Ascending aorta (tissue), 2 donors: ENCODE measurements at regions of chr17 and their contacts with region 1.

Region 1: DNA sequence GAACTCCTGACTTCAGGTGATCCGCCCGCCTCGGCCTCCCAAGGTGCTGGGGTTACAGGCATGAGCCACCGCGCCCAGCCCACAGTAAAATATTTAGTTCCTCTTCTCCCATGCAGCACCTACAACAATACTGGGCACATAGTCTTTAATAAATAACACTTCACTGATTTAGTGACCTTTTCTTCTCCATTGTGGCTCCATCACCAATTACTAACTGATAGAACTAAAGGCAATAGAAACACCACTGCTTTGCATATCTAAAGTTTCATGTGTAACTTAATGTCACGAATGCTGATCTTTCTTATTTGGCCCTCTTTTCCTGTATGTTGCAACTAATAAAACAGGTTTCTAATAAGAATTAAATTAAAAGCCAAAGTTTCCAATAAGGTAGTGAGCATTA is 38.9 kb downstream of the TRIM37 start:
- DNase-seq: no peak
- H3K4me3 ChIP-seq: no peak overlapping the region
- H3K27ac ChIP-seq: no peak overlapping the region
- H3K4me1 ChIP-seq: no peaks in the 10 kb centered on the region
- H3K27me3 ChIP-seq: no peaks in the 10 kb centered on the region
- CTCF ChIP-seq: no peak

Region 2: GRCh38 chr17:59106463-59107305 is 38.9 kb after region 1 on chr17 and contains the start of gene TRIM37:
- intact Hi-C with region 1: no loop called
- DNase-seq: peak; percentile 84 to 98
- H3K4me3 ChIP-seq: peak within 1 kb of the TSS; percentile 78 to 95
- H3K27ac ChIP-seq: peak within 1 kb of the TSS; percentile 87 to 89
- H3K4me1 ChIP-seq: peaks cover 4 to 13% of the 10 kb centered on the region in 2 donors
- H3K27me3 ChIP-seq: no peaks in the 10 kb centered on the region
- CTCF ChIP-seq: peak in 1 of 3 experiments; percentile 6
- total RNA-seq, gene TRIM37: 15.0 TPM

Region 3: GRCh38 chr17:59124665-59125064 is 56.9 kb after region 1 on chr17:
- intact Hi-C with region 1: no loop called
- DNase-seq: no peak
- H3K4me3 ChIP-seq: no peak overlapping the region
- H3K27ac ChIP-seq: no peak overlapping the region
- H3K4me1 ChIP-seq: no peaks in the 10 kb centered on the region
- H3K27me3 ChIP-seq: no peaks in the 10 kb centered on the region
- CTCF ChIP-seq: no peak

Region 4: DNA sequence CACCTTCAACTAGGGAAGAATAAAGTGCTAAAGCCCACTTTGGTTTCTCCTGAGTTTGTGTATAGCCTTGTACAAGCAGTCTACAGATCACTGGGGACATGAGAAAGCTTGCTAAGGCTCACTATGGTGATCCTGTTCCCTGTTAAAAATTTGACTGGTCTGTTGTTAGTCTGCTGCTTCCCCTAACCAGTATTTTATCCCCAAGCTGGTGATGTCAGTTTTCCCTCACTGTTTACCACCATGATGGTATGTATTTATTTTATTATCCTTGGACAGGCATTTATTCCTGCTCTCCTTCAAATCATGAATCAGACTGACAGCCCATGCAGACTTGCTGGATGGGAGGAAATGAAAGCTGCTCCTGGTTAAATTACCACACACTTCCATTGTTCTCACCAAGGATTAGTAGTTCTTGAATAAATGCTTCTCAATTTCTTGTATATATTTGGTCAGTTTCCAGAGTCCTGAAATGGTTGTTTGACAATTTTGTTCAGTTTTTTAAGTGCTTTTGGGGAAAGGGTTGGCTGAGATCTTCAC is 1181.6 kb after region 1 on chr17:
- intact Hi-C with region 1: loop called (anchors 10 kb)
- DNase-seq: no peak
- H3K4me3 ChIP-seq: no peak overlapping the region
- H3K27ac ChIP-seq: no peak overlapping the region
- H3K4me1 ChIP-seq: no peaks in the 10 kb centered on the region
- H3K27me3 ChIP-seq: no peaks in the 10 kb centered on the region
- CTCF ChIP-seq: no peak